ENCODE measurements at regions of chr3 and their contacts with region 1.

Region 1: GRCh38 chr3:30768703-30769685 is 125.5 kb downstream of the GADL1 start:
- DNase-seq: peak; percentile 32
- H3K4me3 ChIP-seq: no peak overlapping the region
- H3K27ac ChIP-seq: no peak overlapping the region
- H3K4me1 ChIP-seq: peaks cover 15% of the 10 kb centered on the region
- H3K27me3 ChIP-seq: no peaks in the 10 kb centered on the region
- CTCF ChIP-seq: peak; percentile 83 to 95

Region 2: DNA sequence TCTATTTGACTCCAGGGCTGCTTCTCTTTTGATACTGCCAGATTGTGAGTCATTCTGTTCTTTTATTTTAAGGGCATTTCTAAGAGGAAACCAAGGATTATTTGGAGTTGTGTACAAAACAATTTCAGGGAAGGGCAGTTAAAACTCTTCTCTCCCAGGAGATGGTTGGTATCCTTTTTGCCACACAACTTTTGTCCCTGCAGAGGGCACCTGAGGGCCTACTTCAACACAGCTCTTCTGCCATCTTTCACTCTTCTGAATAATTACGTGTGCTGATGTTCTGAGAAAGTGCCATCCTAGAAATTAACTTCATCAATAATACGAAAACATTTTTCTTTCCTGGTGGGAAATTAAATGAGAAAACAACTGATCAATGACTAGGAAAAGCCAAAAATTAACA is 201.2 kb after region 1 on chr3:
- CTCF ChIA-PET with region 1: no interaction called
- dilution Hi-C with region 1: no loop called
- in situ Hi-C with region 1: no loop called
- intact Hi-C with region 1: loop called (anchors 2 kb)
- DNase-seq: peak; percentile 20
- H3K4me3 ChIP-seq: no peak overlapping the region
- H3K27ac ChIP-seq: no peak overlapping the region
- H3K4me1 ChIP-seq: peaks cover under 1% of the 10 kb centered on the region
- H3K27me3 ChIP-seq: no peaks in the 10 kb centered on the region
- CTCF ChIP-seq: peak; percentile 14 to 64

Region 3: GRCh38 chr3:31960793-31961431 is 1191.9 kb after region 1 on chr3:
- CTCF ChIA-PET with region 1: interaction called, 24 read pairs
- dilution Hi-C with region 1: no loop called
- in situ Hi-C with region 1: no loop called
- intact Hi-C with region 1: no loop called
- DNase-seq: peak; percentile 69
- H3K4me3 ChIP-seq: peak overlapping the region in 1 of 3 experiments; percentile 4
- H3K27ac ChIP-seq: peak overlapping the region; percentile 72
- H3K4me1 ChIP-seq: peaks cover 36% of the 10 kb centered on the region
- H3K27me3 ChIP-seq: no peaks in the 10 kb centered on the region
- CTCF ChIP-seq: no peak

Measured in mammary epithelial cell (primary cell).